HCT116 (cell line): ENCODE measurements at regions of chr17 and their contacts with region 1.

Region 1: GRCh38 chr17:68771867-68772515 is 170.8 kb upstream of the FAM20A start:
- DNase-seq: peak; percentile 62
- ATAC-seq: peak; percentile 67
- H3K4me3 ChIP-seq: peak overlapping the region; percentile 4 to 10; a peak in 1 of 4 replicates
- H3K27ac ChIP-seq: no peak overlapping the region
- H3K4me1 ChIP-seq: peaks cover 4 to 9% of the 10 kb centered on the region in 2 experiments; a peak in 3 of 4 replicates
- H3K27me3 ChIP-seq: no peaks in the 10 kb centered on the region
- CTCF ChIP-seq: peak; percentile 65 to 84 (median 78)
- POLR2A ChIP-seq: no peak
- RAD21 ChIP-seq: peak; percentile 77

Region 2: GRCh38 chr17:68753985-68754769 is 17.8 kb before region 1 on chr17:
- CTCF ChIA-PET with region 1: no interaction called
- POLR2A ChIA-PET with region 1: no interaction called
- RAD21 ChIA-PET with region 1: no interaction called
- intact Hi-C with region 1: no loop called
- DNase-seq: no peak
- ATAC-seq: no peak
- H3K4me3 ChIP-seq: no peak overlapping the region
- H3K27ac ChIP-seq: no peak overlapping the region
- H3K4me1 ChIP-seq: peaks cover 4 to 5% of the 10 kb centered on the region in 2 experiments; a peak in 3 of 4 replicates
- H3K27me3 ChIP-seq: no peaks in the 10 kb centered on the region
- CTCF ChIP-seq: no peak
- POLR2A ChIP-seq: no peak
- RAD21 ChIP-seq: no peak

Region 3: DNA sequence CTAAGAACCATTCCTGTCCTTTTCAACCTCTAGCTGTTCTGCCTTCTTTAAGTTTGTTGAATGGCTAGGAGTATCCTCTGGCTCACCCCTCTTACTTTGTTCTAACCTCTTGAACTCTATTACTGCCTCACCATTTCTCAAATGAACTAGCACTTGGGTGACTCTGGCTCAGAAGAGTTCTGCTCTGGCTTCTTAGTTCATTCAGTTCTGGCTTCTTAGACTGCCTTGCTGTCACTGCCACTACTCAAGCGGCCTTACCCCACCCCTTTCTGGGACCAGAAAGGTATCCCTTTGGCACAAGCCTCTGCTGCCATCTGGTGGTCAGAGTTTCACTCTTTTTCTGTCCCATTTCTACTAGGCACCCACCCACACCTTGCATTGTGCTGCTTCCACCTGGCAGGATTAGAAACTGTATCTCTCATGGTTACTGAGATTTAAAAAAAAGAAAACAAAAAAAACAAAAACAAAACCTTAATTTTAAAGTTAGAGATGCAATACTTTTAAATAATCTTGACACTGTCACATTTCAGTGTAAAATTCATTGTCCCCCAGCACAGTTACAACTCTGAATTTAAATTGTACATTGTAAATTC is 463.4 kb after region 1 on chr17:
- CTCF ChIA-PET with region 1: interaction called, 86 read pairs
- POLR2A ChIA-PET with region 1: no interaction called
- RAD21 ChIA-PET with region 1: interaction called in 1 of 2 experiments, 3 read pairs
- intact Hi-C with region 1: loop called (anchors 1 kb)
- DNase-seq: peak; percentile 89
- ATAC-seq: peak; percentile 99
- H3K4me3 ChIP-seq: no peak overlapping the region
- H3K27ac ChIP-seq: no peak overlapping the region
- H3K4me1 ChIP-seq: 0 out of 4 replicates have a peak, but pooled peaks cover 0 to 3% of the 10 kb centered on the region in 2 experiments
- H3K27me3 ChIP-seq: no peaks in the 10 kb centered on the region
- CTCF ChIP-seq: peak; percentile 82 to 97 (median 97)
- POLR2A ChIP-seq: no peak
- RAD21 ChIP-seq: peak; percentile 98